ENCODE measurements at regions of chr1 and their contacts with region 1.

Region 1: GRCh38 chr1:10598389-10598702 is 123.6 kb downstream of the PEX14 start:
- DNase-seq: peak in 1 of 2 experiments; percentile 22
- H3K4me3 ChIP-seq: peak overlapping the region; percentile 47
- H3K4me3 Mint-ChIP-seq: peak overlapping the region; percentile 86
- H3K27ac Mint-ChIP-seq: peak overlapping the region; percentile 96
- H3K4me1 ChIP-seq: peaks cover 63% of the 10 kb centered on the region
- H3K4me1 Mint-ChIP-seq: no peaks in the 10 kb centered on the region
- H3K27me3 ChIP-seq: no peaks in the 10 kb centered on the region
- H3K27me3 Mint-ChIP-seq: no peaks in the 10 kb centered on the region
- CTCF ChIP-seq: no peak

Region 2: GRCh38 chr1:10553118-10553517 is 45.2 kb before region 1 on chr1:
- CTCF ChIA-PET with region 1: no interaction called
- POLR2A ChIA-PET with region 1: no interaction called
- intact Hi-C with region 1: loop called (anchors 1 kb)
- DNase-seq: no peak
- H3K4me3 ChIP-seq: no peak overlapping the region
- H3K4me3 Mint-ChIP-seq: no peak overlapping the region
- H3K27ac Mint-ChIP-seq: peak overlapping the region; percentile 9
- H3K4me1 ChIP-seq: peaks cover 27% of the 10 kb centered on the region; the same call in 1 of the 2 replicates
- H3K4me1 Mint-ChIP-seq: peaks cover 18% of the 10 kb centered on the region
- H3K27me3 ChIP-seq: no peaks in the 10 kb centered on the region
- H3K27me3 Mint-ChIP-seq: no peaks in the 10 kb centered on the region
- CTCF ChIP-seq: no peak

Region 3: GRCh38 chr1:10578071-10578470 is 20.3 kb before region 1 on chr1:
- CTCF ChIA-PET with region 1: interaction called, 3 read pairs
- POLR2A ChIA-PET with region 1: no interaction called
- intact Hi-C with region 1: loop called (anchors 2 kb)
- DNase-seq: no peak
- H3K4me3 ChIP-seq: no peak overlapping the region
- H3K4me3 Mint-ChIP-seq: no peak overlapping the region
- H3K27ac Mint-ChIP-seq: no peak overlapping the region
- H3K4me1 ChIP-seq: peaks cover 9% of the 10 kb centered on the region
- H3K4me1 Mint-ChIP-seq: peaks cover 11% of the 10 kb centered on the region
- H3K27me3 ChIP-seq: no peaks in the 10 kb centered on the region
- H3K27me3 Mint-ChIP-seq: no peaks in the 10 kb centered on the region
- CTCF ChIP-seq: no peak

Region 4: DNA sequence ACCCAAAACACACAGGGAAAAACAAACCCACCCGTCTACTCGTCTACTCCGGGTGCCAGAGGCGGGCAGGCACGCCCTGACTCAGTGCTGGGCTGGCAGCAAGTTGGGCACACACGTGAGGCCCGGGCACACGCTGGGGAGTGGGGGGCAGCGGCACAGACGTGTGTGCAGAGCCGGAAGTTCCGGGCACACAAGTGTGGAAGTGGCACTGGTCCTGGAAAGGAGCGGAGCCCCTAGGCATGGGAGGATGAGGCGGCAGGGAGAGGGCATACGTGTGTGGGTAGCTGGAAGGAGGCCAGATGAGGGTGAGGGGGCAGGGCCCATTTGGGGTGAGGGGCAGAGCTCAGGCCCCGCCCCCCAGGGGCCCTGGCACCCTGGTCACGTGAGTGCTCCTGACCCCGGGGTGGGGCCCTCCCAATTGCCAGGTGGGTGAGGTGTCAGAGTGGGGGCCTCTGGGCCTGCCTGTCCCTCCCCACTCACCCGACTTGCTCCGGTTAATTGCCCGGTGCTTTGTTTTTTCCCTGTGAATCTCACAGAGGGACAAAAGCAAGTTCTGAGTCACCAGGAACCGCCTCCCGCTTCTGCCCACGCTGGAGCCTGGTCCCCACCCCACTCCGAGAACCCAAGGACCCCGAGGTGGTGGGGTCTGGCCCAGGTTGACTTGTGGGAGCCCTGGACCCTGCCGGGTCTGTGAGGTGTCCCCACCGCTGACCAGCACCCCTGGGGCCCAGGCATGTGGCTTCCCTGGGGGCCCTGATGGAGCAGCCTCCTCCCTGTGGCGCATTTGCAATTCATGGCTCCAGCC is 302.9 kb after region 1 on chr1:
- CTCF ChIA-PET with region 1: no interaction called
- POLR2A ChIA-PET with region 1: interaction called, 11 read pairs
- intact Hi-C with region 1: no loop called
- DNase-seq: peak; percentile 68 to 73
- H3K4me3 ChIP-seq: peak overlapping the region; percentile 10; the same call in 1 of the 2 replicates
- H3K4me3 Mint-ChIP-seq: peak overlapping the region; percentile 78
- H3K27ac Mint-ChIP-seq: peak overlapping the region; percentile 98
- H3K4me1 ChIP-seq: peaks cover 38% of the 10 kb centered on the region
- H3K4me1 Mint-ChIP-seq: peaks cover 25% of the 10 kb centered on the region
- H3K27me3 ChIP-seq: no peaks in the 10 kb centered on the region
- H3K27me3 Mint-ChIP-seq: no peaks in the 10 kb centered on the region
- CTCF ChIP-seq: no peak

Measured in Caco-2 (cell line).